Mammary epithelial cell (primary cell): ENCODE measurements at regions of chr4 and their contacts with region 1.

Region 1: GRCh38 chr4:138935-139334 is 14.6 kb downstream of the ZNF718 start:
- DNase-seq: no peak
- H3K4me3 ChIP-seq: no peak overlapping the region
- H3K27ac ChIP-seq: no peak overlapping the region
- H3K4me1 ChIP-seq: no peaks in the 10 kb centered on the region
- H3K27me3 ChIP-seq: no peaks in the 10 kb centered on the region
- CTCF ChIP-seq: no peak

Region 2: DNA sequence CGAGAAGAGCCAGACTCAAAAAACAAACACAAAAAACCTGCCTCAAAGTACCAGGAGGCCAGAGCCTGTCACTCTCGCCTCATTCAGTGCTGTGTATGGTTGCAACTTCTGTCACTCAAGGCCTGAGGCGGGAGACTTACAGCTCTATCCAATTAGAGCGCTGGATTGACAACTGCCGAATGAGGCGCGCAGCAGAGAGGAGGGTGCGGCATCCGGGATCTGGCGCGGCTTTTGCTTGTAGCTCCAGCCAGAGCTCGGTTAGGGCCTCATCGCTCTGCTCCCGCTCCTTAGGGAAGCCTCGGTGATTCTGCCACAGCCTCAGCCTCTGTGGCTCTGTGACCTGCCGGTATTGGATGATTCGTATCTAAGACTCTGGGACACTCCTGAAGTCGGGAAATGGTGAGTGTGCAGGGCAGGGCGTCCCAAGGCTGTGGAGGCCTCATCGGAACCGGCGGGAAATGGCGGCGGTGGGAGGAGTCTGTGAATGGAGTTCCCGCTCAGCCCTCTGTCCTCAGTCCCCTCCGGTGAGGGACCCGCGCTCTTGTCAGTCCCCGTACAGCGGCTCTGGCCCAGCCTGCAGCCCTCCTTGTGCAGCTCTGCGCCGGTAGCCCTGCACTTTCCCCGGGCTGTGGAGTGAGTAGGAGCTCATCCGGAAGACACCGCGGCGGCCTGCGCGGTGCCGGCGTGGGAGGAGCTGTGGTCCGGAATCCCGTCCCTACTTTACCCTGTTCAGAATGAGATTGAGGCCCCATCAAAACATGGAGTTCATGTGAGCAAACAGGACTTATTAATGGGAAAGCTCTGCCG is 14.5 kb before region 1 on chr4 and contains the start of gene ZNF718:
- CTCF ChIA-PET with region 1: no interaction called
- dilution Hi-C with region 1: no loop called
- in situ Hi-C with region 1: no loop called
- intact Hi-C with region 1: loop called (anchors 1 kb)
- DNase-seq: peak; percentile 97
- H3K4me3 ChIP-seq: peak within 1 kb of the TSS; percentile 85 to 99 (median 90)
- H3K27ac ChIP-seq: peak within 1 kb of the TSS; percentile 89
- H3K4me1 ChIP-seq: peaks cover 3% of the 10 kb centered on the region
- H3K27me3 ChIP-seq: no peaks in the 10 kb centered on the region
- CTCF ChIP-seq: no peak
- total RNA-seq, gene ZNF718: 9.2 to 11.8 TPM

Region 3: DNA sequence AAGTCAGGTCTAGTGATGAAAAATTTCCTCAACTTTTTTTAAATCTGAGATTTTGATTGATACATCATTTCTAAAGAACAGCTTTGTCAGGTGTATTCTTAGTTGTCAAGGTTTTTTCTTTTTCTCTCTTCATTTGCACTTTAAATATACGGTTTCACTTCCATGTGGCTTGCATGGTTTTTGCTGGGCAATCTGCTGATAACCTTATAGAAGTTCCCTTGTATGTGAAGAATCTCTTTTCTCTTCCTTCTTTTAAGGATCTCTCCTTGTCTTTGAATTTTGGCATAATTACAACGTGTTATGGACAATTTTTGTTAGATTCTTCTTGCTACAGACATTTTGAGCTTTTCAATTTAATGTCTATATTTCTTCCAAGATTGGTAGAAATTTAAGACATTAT is 283.7 kb after region 1 on chr4:
- CTCF ChIA-PET with region 1: no interaction called
- dilution Hi-C with region 1: no loop called
- in situ Hi-C with region 1: no loop called
- intact Hi-C with region 1: no loop called
- DNase-seq: no peak
- H3K4me3 ChIP-seq: no peak overlapping the region
- H3K27ac ChIP-seq: no peak overlapping the region
- H3K4me1 ChIP-seq: no peaks in the 10 kb centered on the region
- H3K27me3 ChIP-seq: no peaks in the 10 kb centered on the region
- CTCF ChIP-seq: no peak

Region 4: DNA sequence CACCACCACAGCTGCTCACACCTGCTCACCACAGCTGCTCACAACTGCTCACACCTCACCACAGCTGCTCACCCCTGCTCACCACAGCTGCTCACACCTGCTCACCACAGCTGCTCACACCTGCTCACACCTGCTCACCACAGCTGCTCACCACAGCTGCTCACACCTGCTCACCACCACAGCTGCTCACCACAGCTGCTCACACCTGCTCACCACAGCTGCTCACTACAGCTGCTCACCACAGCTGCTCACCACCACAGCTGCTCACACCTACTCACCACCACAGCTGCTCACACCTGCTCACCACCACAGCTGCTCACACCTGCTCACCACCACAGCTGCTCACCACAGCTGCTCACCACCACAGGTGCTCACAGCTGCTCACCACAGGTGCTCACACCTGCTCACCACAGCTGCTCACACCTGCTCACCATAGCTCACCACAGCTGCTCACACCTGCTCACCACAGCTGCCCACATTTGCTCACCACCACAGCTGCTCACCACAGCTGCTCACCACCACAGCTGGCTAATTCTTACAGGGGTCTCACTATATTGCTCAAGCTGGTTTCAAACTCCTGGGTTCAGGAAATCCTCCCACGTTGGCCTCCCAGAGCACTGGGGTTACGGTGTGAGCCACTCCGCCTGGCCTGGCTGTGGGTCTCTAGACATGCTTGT is 717.4 kb after region 1 on chr4:
- CTCF ChIA-PET with region 1: no interaction called
- dilution Hi-C with region 1: no loop called
- in situ Hi-C with region 1: no loop called
- intact Hi-C with region 1: no loop called
- DNase-seq: no peak
- H3K4me3 ChIP-seq: no peak overlapping the region
- H3K27ac ChIP-seq: no peak overlapping the region
- H3K4me1 ChIP-seq: no peaks in the 10 kb centered on the region
- H3K27me3 ChIP-seq: no peaks in the 10 kb centered on the region
- CTCF ChIP-seq: no peak